ENCODE measurements at regions of chr16 and their contacts with region 1.

Region 1: DNA sequence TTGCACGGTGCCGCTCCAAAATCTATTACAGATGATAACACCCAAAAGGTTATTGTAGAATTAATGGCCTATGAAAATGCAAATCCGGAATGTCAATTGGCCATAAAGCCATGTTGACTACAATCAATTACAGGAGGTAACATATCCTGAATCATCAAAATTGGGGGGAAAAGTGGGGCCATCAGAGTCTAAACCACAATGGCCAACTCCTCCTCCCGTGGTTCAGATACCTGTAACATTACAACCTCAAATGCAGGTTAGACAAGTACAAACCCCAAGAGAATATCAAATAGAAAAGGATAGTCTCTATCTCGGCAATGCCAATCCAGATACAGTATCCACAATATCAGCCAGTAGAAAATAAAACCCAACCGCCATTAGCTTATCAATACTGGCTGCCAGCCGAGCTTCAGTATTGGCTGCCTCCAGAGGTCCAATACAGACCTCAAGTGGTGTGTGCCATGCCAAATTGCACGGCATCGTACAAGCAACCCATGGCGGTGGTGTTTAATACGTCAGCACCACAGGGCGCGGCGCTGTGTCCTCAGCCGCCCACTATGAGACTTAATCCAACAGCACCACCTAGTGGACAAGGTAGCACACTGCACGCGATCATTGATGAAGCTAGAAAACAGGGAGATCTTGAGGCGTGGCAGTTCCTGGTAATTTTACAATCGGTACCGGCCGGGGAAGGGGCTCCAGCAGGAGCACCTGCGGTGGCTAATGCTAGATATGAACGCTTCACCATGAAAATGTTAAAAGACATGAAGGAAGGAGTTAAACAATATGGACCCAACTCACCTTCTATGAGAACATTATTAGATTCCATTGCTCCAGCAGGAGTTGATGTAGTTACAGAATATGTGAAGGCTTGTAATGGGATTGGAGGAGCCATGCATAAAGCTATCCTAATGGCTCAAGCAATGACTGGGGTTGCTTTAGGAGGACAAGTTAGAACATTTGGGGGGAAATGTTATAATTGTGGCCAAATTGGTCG is 15.2 kb downstream of the FLYWCH1 start:
- DNase-seq: peak; percentile 92
- ATAC-seq: peak; percentile 70
- H3K4me3 Mint-ChIP-seq: no peak overlapping the region; the same call in 1 of the 2 replicates
- H3K27ac Mint-ChIP-seq: peak overlapping the region; percentile 11; the same call in 1 of the 2 replicates
- H3K4me1 Mint-ChIP-seq: peaks cover 33% of the 10 kb centered on the region
- H3K27me3 Mint-ChIP-seq: peaks cover 9% of the 10 kb centered on the region
- CTCF ChIP-seq: peak; percentile 98

Region 2: DNA sequence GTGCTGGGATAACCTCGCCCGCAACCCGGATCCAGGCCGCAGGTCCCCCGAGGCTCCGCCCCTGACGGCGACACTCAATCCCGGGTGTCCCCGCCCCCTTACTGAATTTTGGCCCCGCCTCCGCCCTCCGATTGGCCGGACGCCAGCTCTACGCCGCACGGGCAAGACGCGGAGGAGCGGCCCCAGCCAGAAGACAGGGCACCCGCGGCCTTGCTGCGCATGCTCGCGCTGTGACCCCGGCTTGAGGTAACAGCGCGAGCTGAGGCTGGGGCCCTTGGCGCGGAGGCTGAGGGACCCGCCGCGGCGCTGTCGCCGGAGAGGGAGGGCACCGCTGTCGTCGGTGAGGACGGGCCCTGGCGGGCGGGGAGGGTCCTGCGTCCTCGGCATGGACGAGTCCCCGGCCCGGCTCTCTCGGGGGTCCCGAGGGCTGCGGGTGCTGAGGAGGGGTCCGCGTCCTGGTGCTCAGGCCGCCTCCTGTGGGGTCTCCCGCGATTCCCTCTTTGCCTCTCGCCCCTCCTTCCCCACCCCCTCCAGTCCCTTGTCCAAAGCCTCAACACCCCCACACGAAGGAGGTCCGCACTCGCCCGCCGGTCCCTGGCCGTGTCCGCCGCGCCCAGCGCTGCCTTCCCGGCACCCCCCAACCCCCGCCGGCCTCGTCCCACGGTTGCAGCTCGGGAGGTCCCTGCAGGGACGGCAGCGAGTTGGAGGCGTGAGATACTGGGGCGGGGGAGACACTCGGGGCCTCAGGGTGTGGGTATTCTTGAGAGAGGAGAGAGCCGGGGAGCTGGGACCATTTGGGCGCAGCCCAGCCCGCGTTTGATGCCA is 43.7 kb before region 1 on chr16 and contains the start of gene FLYWCH2:
- CTCF ChIA-PET with region 1: interaction called, 24 read pairs
- POLR2A ChIA-PET with region 1: interaction called, 3 read pairs
- DNase-seq: peak; percentile 100
- ATAC-seq: peak; percentile 87
- H3K4me3 Mint-ChIP-seq: peak within 1 kb of the TSS; percentile 83
- H3K27ac Mint-ChIP-seq: peak within 1 kb of the TSS; percentile 82
- H3K4me1 Mint-ChIP-seq: peaks cover 6% of the 10 kb centered on the region
- H3K27me3 Mint-ChIP-seq: peaks cover 40% of the 10 kb centered on the region
- CTCF ChIP-seq: no peak
- total RNA-seq, gene FLYWCH2: 19.7 to 25.0 TPM (median 20.7 TPM) in 3 replicates

Region 3: GRCh38 chr16:2911580-2912329 is 15.2 kb before region 1 on chr16 and contains the start of gene FLYWCH1:
- CTCF ChIA-PET with region 1: interaction called, 42 read pairs
- POLR2A ChIA-PET with region 1: interaction called, 4 read pairs
- DNase-seq: peak; percentile 99
- ATAC-seq: peak; percentile 98
- H3K4me3 Mint-ChIP-seq: peak within 1 kb of the TSS; percentile 86
- H3K27ac Mint-ChIP-seq: peak within 1 kb of the TSS; percentile 83
- H3K4me1 Mint-ChIP-seq: peaks cover 14% of the 10 kb centered on the region
- H3K27me3 Mint-ChIP-seq: peaks cover 37% of the 10 kb centered on the region
- CTCF ChIP-seq: no peak
- total RNA-seq, gene FLYWCH1: 27.2 to 34.2 TPM (median 32.6 TPM) in 3 replicates

Region 4: GRCh38 chr16:2968738-2969544 is 42.0 kb after region 1 on chr16 and contains the start of gene PAQR4:
- CTCF ChIA-PET with region 1: interaction called, 22 read pairs
- POLR2A ChIA-PET with region 1: no interaction called
- DNase-seq: peak; percentile 89
- ATAC-seq: peak; percentile 62
- H3K4me3 Mint-ChIP-seq: peak within 1 kb of the TSS; percentile 66
- H3K27ac Mint-ChIP-seq: no peak within 1 kb of the TSS
- H3K4me1 Mint-ChIP-seq: peaks cover 27% of the 10 kb centered on the region
- H3K27me3 Mint-ChIP-seq: peaks cover 33% of the 10 kb centered on the region
- CTCF ChIP-seq: no peak
- total RNA-seq, gene PAQR4: 21.1 to 32.4 TPM (median 21.5 TPM) in 3 replicates

Measured in WTC11 (cell line).